ENCODE measurements at regions of chr19 and their contacts with region 1.

Region 1: GRCh38 chr19:50376166-50377050 is at the start of gene NR1H2:
- DNase-seq: peak; percentile 92
- ATAC-seq: peak; percentile 94
- H3K4me3 ChIP-seq: peak within 1 kb of the TSS; percentile 86 to 94 (median 90)
- H3K27ac ChIP-seq: peak within 1 kb of the TSS; percentile 96
- H3K4me1 ChIP-seq: no peaks in the 10 kb centered on the region
- H3K27me3 ChIP-seq: no peaks in the 10 kb centered on the region; a peak in 1 of 5 replicates
- CTCF ChIP-seq: no peak
- EP300 ChIP-seq: no peak
- POLR2A ChIP-seq: peak; percentile 54 to 61
- RAD21 ChIP-seq: peak; percentile 46; the same call in 1 of the 2 replicates
- total RNA-seq, gene NR1H2: 11.7 and 13.5 TPM in 2 replicates

Region 2: DNA sequence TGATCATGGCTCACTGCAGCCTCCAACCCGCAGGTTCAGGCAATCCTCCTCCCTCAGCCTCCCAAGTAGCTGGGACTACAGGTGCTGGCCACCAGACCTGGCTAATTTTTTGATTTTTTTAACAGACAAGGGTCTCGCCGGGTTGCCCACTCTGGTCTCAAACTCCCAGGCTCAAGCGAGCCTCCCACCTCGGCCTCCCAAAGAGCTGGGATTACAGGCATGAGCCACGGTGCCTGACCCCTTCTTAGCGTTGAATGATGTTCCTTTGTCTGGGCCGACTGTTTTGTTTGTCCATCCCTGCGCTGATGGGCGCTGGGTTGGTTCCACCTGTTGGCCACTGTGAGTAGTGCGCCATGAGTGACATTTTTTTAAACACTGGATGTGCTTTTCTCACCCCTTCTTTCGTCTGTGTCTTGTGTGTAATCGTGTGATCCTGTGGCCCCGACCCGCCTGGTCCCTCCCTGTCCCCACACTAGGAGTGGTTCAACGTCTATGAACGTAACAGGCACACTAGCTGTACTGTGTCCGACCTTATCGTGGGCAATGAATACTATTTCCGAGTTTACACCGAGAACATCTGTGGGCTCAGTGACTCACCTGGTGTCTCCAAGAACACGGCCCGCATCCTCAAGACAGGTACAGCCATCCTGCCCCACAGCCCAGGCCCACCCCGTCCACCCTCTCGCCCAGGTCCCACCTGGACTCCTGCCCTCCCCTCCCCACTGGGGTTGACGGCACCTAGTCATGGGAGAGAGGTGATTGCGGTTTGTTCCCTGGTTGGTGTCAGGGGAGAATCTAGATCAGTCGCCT is 84.9 kb after region 1 on chr19:
- CTCF ChIA-PET with region 1: no interaction called
- POLR2A ChIA-PET with region 1: interaction called, 7 read pairs
- in situ Hi-C with region 1: loop called (anchors 10 kb)
- intact Hi-C with region 1: no loop called
- DNase-seq: peak; percentile 71
- ATAC-seq: peak; percentile 63
- H3K4me3 ChIP-seq: peak overlapping the region in 1 of 3 experiments; percentile 43; a peak in 1 of 6 replicates
- H3K27ac ChIP-seq: no peak overlapping the region
- H3K4me1 ChIP-seq: peaks cover 46% of the 10 kb centered on the region
- H3K27me3 ChIP-seq: peaks cover 0 to 7% of the 10 kb centered on the region in 2 experiments; a peak in 2 of 5 replicates
- CTCF ChIP-seq: peak; percentile 89
- EP300 ChIP-seq: no peak
- POLR2A ChIP-seq: no peak
- RAD21 ChIP-seq: peak; percentile 72

Measured in HepG2 (cell line).